Left cardiac atrium (tissue), 4 donors: ENCODE measurements at regions of chr1 and their contacts with region 1.

Region 1: GRCh38 chr1:57033222-57034001 is 67.6 kb upstream of the C8B start:
- DNase-seq: no peak
- ATAC-seq: no peak

Region 2: DNA sequence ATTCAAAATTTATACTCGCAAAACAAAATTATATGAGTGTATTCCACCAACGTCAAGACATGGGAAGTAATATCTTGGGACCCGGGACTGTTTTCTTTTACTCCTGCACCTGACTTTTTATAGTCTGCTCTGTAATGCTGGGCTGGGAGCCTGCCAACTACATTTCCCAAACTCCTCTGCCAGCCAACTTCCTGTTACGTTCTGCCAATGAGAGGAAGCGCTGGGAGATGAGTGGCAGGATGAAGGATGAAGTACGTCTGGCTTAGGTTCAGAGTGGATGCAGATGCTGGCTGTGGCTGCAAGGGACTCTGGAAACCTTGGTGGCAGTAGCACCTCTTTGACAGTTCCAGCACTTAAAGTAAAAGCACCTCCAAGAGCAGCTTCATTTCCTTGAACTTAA is 1877.9 kb before region 1 on chr1:
- intact Hi-C with region 1: no loop called
- DNase-seq: peak; percentile 53
- ATAC-seq: peak; percentile 77 to 83

Region 3: GRCh38 chr1:56539520-56539931 is 493.9 kb before region 1 on chr1:
- intact Hi-C with region 1: no loop called
- DNase-seq: no peak
- ATAC-seq: no peak

Region 4: GRCh38 chr1:56934430-56935060 is 98.9 kb before region 1 on chr1:
- intact Hi-C with region 1: loop called in 1 of 2 experiments (anchors 5 kb)
- DNase-seq: no peak
- ATAC-seq: no peak

Region 5: DNA sequence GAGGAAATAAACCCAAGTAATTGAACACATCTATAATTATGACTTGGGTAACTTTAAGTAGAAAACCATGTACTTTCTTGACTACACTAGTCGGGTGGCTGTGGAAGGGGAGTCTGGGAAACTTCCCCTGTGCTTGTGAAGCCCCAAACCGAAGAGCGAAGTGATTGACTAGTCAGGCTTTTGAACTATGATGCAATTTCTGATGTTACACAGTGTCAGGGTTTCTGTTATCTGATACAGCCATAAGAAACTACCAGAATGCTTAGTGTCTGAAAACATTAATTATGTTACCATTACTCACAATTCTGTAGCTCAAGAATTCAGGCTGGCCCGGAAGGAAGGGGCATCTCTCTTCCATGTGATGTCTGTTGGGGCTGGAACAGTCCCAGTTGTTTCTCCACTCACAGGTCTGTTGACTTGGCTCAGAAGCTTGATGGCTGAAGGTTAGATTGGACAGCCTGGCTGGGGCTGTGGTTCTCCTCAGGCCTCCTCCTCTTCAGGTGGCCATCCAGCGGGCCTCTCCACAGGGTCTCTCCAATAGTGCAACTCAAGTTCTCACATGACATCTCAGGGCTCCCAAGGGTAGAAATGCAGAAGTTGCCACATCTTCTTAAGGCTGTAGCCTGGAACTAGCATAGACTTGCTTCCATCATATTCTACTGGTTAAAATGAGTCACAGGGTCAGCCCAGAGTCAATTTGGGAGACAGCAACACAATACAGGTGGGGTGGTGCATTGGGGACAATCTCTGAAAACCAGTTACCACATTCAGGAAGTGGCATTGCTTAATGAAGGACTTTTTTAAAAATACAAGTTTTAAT is 59.3 kb before region 1 on chr1:
- intact Hi-C with region 1: no loop called
- DNase-seq: no peak
- ATAC-seq: no peak